ENCODE measurements at regions of chr2 and their contacts with region 1.

Region 1: DNA sequence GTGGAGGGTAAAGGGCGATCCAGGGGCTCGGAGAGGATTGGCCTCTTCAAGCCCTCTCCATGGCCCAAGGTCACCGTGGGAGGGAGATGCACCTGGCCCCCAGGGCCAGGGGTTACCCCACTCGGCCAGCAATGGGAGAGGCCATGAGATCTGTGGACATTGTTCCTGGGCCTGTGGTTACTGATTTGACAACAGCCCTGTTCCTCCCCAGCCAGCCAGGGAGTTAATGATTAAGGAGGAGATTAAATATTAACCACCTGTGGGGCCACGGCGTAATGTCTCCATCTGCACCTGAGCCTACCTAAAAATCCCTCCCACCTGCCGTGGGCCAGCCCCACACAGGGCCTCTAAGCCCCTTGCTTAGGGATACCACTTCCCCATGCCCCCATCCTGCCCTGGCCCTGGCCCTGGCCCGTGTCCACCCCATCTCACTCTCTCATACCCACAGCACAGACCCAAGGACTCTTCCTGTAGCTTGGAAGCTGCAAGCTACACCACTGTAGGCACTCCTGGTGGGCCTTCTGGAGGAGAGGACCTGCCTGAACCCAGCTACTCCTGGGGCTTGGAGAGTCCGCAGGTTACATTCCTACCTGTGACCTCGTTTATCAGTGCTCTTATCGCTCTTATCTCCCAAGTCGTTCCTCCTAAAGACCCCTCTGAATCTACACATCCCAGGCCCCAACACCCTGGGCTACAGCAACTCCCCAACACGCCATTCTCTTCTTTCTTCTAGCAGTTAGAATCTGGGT is 32.1 kb downstream of the ZFP36L2 start:
- DNase-seq: peak; percentile 85 to 89
- ATAC-seq: peak; percentile 78 to 83
- H3K4me3 ChIP-seq: peak overlapping the region; percentile 11; the same call in 1 of the 3 replicates
- H3K27ac ChIP-seq: peak overlapping the region; percentile 93 to 97
- H3K4me1 ChIP-seq: peaks cover 56% of the 10 kb centered on the region
- CTCF ChIP-seq: no peak
- EP300 ChIP-seq: no peak
- POLR2A ChIP-seq: peak; percentile 39
- RAD21 ChIP-seq: 0 out of 5 replicates have a peak, but pooled peaks of 1 of the 2 experiments have one; percentile 25

Region 2: GRCh38 chr2:43115881-43116280 is 78.4 kb before region 1 on chr2:
- CTCF ChIA-PET with region 1: no interaction called
- POLR2A ChIA-PET with region 1: no interaction called
- DNase-seq: no peak
- ATAC-seq: no peak
- H3K4me3 ChIP-seq: no peak overlapping the region
- H3K27ac ChIP-seq: no peak overlapping the region
- H3K4me1 ChIP-seq: peaks cover 8% of the 10 kb centered on the region
- CTCF ChIP-seq: no peak
- EP300 ChIP-seq: no peak
- POLR2A ChIP-seq: no peak
- RAD21 ChIP-seq: no peak

Region 3: GRCh38 chr2:43161650-43162510 is 32.4 kb before region 1 on chr2:
- CTCF ChIA-PET with region 1: no interaction called
- POLR2A ChIA-PET with region 1: no interaction called
- DNase-seq: no peak
- ATAC-seq: no peak
- H3K4me3 ChIP-seq: no peak overlapping the region
- H3K27ac ChIP-seq: peak overlapping the region; percentile 67 to 95
- H3K4me1 ChIP-seq: peaks cover 72% of the 10 kb centered on the region
- CTCF ChIP-seq: no peak
- EP300 ChIP-seq: no peak
- POLR2A ChIP-seq: no peak
- RAD21 ChIP-seq: no peak

Region 4: DNA sequence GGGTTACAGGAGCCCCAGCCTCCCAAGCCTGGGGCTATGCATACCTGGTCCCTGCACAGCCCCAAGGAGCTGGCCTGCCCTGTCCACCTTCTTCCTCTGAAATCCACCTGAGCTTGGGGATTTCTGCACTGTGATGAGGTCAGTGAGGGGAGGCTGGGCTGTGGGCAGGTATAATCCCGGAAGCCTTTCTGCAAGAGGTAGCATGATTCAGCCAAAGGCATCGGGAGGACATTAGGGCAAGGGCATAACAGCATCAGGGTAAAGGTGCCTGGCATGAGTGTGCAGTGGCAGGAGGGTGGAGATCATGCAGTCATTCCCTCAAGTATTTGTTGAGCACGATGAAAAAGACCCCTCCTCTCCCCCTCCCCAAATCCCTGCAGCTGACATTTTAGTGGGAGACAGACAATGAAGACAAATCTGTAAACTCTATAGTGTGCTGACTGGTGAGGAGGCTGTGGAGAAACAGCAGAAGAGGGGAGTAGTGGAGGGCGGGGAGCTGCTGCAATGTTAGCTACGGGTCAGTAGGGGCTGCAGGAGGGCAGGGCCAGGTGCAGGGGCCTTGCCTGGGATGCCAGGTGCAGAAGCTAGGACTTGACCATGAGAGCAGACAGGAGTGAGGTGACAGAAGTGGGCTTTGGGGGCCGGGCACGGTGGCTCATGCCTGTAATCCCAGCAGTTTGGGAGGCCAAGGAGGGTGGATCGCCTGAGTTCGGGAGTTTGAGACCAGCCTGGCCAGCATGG is 13.4 kb after region 1 on chr2:
- CTCF ChIA-PET with region 1: interaction called, 10 read pairs
- POLR2A ChIA-PET with region 1: no interaction called
- DNase-seq: no peak
- ATAC-seq: peak; percentile 40 to 74; a peak in 5 of 6 replicates
- H3K4me3 ChIP-seq: no peak overlapping the region
- H3K27ac ChIP-seq: peak overlapping the region in 1 of 2 experiments; percentile 55; a peak in 2 of 6 replicates
- H3K4me1 ChIP-seq: peaks cover 13% of the 10 kb centered on the region
- CTCF ChIP-seq: no peak
- EP300 ChIP-seq: no peak
- POLR2A ChIP-seq: no peak
- RAD21 ChIP-seq: no peak

Region 5: GRCh38 chr2:43358410-43359201 is 164.3 kb after region 1 on chr2:
- CTCF ChIA-PET with region 1: no interaction called
- POLR2A ChIA-PET with region 1: no interaction called
- DNase-seq: no peak
- ATAC-seq: no peak
- H3K4me3 ChIP-seq: no peak overlapping the region
- H3K27ac ChIP-seq: peak overlapping the region in 1 of 2 experiments; percentile 11; a peak in 1 of 6 replicates
- H3K4me1 ChIP-seq: peaks cover 14% of the 10 kb centered on the region; the same call in 2 of the 3 replicates
- CTCF ChIP-seq: no peak
- EP300 ChIP-seq: no peak
- POLR2A ChIP-seq: no peak
- RAD21 ChIP-seq: no peak

Region 6: DNA sequence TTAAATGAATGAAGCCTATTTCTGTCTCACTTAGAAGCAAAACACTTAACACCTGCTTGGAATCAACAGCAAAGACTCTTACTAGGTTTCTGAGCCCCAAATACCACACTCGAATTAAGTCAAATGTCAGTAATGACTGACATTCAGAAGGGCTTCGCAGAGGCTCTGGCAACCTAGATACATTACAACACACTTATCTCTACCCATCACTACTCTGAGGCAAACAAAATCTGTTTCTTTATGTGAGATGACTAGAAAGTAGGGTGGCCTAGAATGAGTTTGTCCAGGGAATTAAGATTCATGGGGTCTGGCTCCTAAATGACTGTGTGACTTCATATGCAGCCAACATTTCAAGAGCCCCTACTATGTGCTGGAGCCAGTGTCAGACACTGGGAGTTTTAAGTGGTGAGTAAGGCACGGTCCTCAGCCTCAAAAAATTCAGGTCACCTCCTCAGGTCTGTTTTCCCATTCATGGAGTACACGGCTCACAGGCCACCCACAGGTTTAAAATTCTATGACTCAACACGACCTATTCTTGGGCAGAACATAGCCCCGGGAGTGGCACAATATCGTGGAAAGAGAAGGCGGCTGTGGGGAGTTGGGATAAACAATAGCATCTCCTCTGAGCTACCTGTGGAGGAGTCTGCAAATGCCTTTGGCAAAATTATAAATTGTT is 182.4 kb after region 1 on chr2:
- CTCF ChIA-PET with region 1: no interaction called
- POLR2A ChIA-PET with region 1: no interaction called
- DNase-seq: no peak
- ATAC-seq: no peak
- H3K4me3 ChIP-seq: no peak overlapping the region
- H3K27ac ChIP-seq: no peak overlapping the region
- H3K4me1 ChIP-seq: peaks cover 11% of the 10 kb centered on the region
- CTCF ChIP-seq: no peak
- EP300 ChIP-seq: no peak
- POLR2A ChIP-seq: no peak
- RAD21 ChIP-seq: no peak